Upper lobe of right lung (tissue), 1 donor: ENCODE measurements at regions of chr9 and their contacts with region 1.

Region 1: GRCh38 chr9:107039542-107039941 is 176.6 kb downstream of the ZNF462 start:
- DNase-seq: no peak
- ATAC-seq: no peak
- H3K4me3 ChIP-seq: no peak overlapping the region
- H3K27ac ChIP-seq: no peak overlapping the region
- H3K4me1 ChIP-seq: no peaks in the 10 kb centered on the region
- H3K27me3 ChIP-seq: no peaks in the 10 kb centered on the region
- CTCF ChIP-seq: no peak

Region 2: DNA sequence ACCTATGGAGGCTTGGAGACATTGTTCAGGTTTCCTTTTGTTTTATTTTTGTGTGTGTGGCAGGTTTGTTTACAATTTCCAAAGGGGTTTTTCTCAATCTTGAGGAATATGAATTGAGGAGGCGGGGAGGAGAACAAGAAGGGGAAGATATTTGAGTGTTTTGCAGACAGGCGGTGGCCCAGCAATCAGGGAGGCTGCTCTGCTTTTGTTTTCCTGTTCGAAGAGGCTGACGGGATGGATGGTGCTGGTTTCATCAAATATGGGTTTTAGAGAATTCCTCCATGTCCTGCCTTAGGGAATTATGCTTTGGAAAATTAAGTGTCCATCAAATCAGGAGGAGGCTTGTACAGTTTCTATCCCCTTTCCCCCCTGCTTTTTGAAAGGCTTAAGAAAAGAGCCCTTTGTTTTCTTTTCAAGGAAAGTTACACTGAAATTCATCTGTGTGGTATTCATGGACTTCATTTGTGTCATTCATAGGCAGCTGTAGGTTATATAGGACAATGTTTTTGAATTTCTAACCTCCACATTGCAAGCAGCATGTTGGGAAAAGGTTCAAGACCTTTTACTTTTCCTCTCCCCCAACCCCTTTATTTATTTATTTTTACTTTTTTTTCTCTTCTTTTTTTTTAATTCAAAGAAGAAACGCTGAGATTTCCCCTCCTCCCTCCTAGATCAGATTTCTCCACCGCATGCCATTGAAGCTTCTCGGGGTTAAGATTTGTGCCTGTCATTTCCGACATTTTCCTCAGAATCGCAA is 69.1 kb before region 1 on chr9:
- intact Hi-C with region 1: no loop called
- DNase-seq: no peak
- ATAC-seq: no peak
- H3K4me3 ChIP-seq: no peak overlapping the region
- H3K27ac ChIP-seq: no peak overlapping the region
- H3K4me1 ChIP-seq: no peaks in the 10 kb centered on the region
- H3K27me3 ChIP-seq: no peaks in the 10 kb centered on the region
- CTCF ChIP-seq: no peak

Region 3: GRCh38 chr9:107090218-107090617 is 50.7 kb after region 1 on chr9:
- intact Hi-C with region 1: loop called (anchors 10 kb)
- DNase-seq: no peak
- ATAC-seq: no peak
- H3K4me3 ChIP-seq: no peak overlapping the region
- H3K27ac ChIP-seq: no peak overlapping the region
- H3K4me1 ChIP-seq: no peaks in the 10 kb centered on the region
- H3K27me3 ChIP-seq: no peaks in the 10 kb centered on the region
- CTCF ChIP-seq: no peak